ENCODE measurements at regions of chr7 and their contacts with region 1.

Region 1: DNA sequence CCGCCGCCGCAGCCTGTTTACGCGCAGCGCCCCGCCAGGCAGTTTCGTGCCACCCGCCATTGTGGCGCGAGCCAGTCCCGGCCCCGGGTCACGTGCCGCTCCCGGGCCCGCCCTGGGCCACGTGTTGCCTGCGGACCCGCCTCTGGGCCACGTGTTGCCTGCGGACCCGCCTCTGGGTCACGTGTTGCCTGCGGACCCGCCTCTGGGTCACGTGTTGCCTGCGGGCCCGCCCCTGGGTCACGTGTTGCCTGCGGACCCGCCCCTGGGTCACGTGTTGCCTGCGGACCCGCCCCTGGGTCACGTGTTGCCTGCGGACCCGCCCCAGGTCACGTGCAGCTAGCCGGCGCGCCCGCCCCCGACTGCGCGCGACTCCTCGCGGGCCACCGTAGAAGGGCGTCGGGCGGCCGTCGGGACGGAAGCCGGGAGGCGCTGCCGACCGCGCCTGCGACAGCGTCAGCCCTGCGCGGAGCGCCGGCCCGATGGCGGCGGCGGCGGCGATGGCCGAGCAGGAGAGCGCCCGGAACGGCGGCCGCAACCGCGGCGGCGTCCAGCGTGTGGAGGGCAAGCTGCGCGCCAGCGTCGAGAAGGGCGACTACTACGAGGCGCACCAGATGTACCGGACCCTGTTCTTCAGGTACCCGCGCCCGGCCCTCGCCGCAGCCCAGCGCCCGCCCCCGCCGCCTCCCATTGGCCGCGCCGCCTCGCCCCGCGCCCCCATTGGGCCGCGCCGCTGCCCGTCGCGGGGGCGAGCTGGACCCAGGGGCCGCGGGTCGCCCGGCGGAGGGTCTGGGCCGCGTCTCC is at the start of gene GET4:
- DNase-seq: peak; percentile 94 to 99
- H3K4me3 ChIP-seq: peak within 1 kb of the TSS; percentile 78 to 91
- H3K27ac ChIP-seq: peak within 1 kb of the TSS; percentile 87 to 90
- H3K4me1 ChIP-seq: peaks cover 0 to 55% (median 37%) of the 10 kb centered on the region in 4 donors
- H3K27me3 ChIP-seq: no peaks in the 10 kb centered on the region
- CTCF ChIP-seq: no peak

Region 2: DNA sequence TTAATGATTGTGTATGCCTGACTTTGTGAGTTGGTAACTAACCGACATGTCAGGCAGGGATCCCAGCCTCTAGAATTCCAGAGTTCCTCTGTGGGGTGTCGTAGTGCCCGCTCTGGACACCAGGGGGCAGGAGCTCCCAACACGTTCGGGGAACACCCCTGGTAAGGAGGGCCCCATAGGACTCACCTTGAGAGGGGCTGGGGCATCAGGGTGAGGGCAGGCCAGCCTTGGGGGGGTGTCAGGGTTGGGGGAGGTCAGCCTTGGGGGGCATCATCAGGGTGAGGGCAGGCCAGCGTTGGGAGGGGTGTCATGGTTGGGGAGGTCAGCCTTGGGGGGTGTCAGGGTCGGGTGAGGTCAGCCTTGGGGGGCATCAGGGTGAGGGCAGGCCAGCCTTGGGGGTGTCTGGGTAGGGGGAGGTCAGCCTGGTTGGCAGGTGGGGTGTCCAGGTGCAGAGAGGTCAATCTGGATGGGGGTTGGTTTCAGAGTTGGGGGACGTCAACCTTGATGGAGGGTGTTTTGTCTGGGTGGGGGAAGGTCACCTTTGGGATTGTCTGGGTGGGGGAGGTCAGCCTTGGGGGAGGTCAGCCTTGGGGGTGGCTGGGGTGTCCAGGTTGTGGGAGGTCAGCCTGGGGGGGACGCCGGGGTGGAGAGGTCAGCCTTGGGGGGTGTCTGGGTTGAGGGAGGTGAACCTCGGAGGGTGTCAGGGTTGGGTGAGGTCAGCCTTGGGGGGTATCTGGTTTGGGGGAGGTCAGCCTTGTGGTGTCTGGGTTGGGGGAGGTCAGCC is 89.7 kb before region 1 on chr7:
- intact Hi-C with region 1: loop called (anchors 2 kb)
- DNase-seq: peak; percentile 64 to 86
- H3K4me3 ChIP-seq: no peak overlapping the region
- H3K27ac ChIP-seq: peak overlapping the region; percentile 8 to 48
- H3K4me1 ChIP-seq: peaks cover 0 to 13% (median 5%) of the 10 kb centered on the region in 4 donors
- H3K27me3 ChIP-seq: no peaks in the 10 kb centered on the region
- CTCF ChIP-seq: peak; percentile 86 to 90

Region 3: DNA sequence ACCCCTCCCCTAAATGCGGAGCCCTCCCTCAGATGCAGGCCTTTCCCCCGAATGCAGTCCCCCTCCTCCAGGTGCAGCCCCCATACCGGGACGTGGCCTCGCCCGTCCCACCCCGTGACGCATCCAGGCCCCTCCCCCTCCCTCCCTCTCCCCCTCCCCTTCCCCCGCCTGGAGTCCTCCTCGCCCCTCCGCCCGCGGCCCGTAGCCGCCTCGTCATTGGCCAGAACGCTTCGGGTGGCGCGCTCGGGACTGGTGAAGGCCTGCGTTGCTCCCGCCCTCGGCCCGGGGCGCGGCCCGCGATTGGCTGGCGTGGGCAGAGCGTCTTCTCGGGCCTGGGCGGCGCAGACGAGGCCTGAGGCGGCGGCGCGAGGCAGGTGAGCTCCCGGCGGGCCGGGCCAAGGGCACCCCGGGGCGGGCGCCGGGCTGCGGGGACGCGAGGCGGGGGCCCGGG is 60.0 kb before region 1 on chr7:
- intact Hi-C with region 1: loop called (anchors 10 kb)
- DNase-seq: peak; percentile 99
- H3K4me3 ChIP-seq: peak overlapping the region; percentile 96 to 97
- H3K27ac ChIP-seq: peak overlapping the region; percentile 95 to 97
- H3K4me1 ChIP-seq: peaks cover 5 to 74% (median 52%) of the 10 kb centered on the region in 4 donors
- H3K27me3 ChIP-seq: no peaks in the 10 kb centered on the region
- CTCF ChIP-seq: no peak

Region 4: DNA sequence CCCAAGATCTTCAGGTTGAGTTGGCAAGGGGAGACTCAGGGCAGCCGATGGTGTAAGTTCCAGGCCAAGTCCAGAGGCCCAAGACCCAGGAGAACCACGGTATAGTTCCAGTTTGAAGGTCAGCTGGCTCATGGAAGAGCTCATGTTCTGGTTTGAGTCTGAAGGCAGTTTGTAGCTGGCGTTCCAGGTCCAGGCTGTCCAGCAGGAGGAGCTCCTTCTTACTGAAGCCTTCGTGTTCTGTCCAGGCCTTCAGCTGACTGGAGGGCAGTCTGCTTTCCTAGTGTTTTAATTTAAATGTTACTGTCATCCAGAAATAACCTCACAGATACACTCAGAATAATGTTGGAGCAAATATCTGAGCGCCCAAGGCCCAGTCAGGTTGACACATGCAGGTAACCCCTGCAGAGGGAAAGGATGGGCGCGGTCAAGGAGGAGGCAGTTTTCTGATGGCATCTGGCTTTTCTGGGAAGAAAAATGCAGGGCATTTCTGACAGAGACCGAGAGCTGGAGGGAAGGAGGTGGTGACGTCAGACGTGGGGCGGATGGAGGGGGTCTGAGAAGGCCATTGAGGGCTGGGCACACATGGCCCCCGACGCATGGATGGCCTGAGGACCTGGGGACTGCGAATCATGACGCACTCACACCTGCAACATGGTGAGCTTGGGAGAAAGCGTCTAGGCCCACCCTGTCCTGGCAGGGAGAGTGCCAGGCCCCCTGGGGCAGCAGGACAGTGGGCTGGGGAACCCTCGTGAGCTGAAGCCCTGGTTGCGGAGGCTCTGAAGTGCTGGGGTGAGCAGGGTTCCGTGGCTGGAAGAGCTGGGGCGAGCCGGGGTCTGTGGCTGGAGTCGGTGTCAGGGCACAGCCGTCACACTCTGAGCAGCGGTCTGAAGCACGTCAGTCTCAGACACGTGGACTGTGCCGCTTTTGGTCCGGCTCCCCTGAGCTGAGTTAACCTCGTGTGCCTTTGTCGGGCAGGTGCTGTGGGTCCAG is 39.7 kb before region 1 on chr7:
- intact Hi-C with region 1: loop called (anchors 5 kb)
- DNase-seq: peak in 1 of 2 donors; percentile 86
- H3K4me3 ChIP-seq: no peak overlapping the region
- H3K27ac ChIP-seq: peak overlapping the region; percentile 87 to 91
- H3K4me1 ChIP-seq: peaks cover 9 to 90% (median 56%) of the 10 kb centered on the region in 4 donors
- H3K27me3 ChIP-seq: no peaks in the 10 kb centered on the region
- CTCF ChIP-seq: peak; percentile 55 to 56

Region 5: DNA sequence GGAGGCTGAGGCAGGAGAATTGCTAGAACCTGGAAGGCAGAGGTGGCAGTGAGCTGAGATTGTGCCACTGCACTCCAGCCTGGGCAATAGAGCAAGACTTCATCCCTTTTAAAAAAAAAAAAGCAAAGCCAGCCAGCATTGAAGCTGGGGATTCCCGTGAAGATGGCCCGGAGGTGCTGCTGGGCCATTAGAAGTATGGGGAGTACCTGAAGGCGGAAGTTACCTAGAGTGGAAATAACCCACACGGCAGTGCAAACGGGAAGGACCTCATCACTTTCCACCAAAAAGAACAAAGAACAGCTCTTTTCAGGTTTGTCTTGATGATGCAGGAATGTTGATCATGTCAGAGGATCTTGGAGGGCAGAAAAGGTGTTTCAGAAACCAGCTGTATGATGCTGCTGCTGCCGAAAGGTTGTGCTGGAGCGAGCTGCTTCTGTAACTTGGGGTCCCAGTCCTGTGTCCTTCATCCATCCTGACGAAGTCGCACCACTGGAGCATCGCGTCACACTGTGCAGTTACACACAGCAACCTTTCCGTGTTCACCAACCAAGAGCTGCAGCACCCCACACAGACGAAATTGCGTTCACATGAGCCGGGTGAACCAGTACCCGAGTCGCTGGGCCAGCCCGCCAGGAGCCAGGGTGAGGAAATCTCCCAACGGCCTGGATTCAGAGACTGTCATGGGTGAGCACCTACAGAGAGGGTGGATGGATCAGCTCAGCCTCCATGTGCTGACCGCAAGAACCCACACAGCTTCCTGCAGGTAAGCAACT is 275.5 kb after region 1 on chr7:
- intact Hi-C with region 1: no loop called
- DNase-seq: no peak
- H3K4me3 ChIP-seq: no peak overlapping the region
- H3K27ac ChIP-seq: no peak overlapping the region
- H3K4me1 ChIP-seq: no peaks in the 10 kb centered on the region
- H3K27me3 ChIP-seq: no peaks in the 10 kb centered on the region
- CTCF ChIP-seq: no peak

Region 6: GRCh38 chr7:1251796-1252545 is 375.6 kb after region 1 on chr7:
- intact Hi-C with region 1: no loop called
- DNase-seq: no peak
- H3K4me3 ChIP-seq: no peak overlapping the region
- H3K27ac ChIP-seq: no peak overlapping the region
- H3K4me1 ChIP-seq: peaks cover 0 to 26% (median 17%) of the 10 kb centered on the region in 4 donors
- H3K27me3 ChIP-seq: peaks cover 7 to 100% of the 10 kb centered on the region in 2 donors
- CTCF ChIP-seq: no peak